Panc1 (cell line): ENCODE measurements at regions of chr10 and their contacts with region 1.

Region 1: DNA sequence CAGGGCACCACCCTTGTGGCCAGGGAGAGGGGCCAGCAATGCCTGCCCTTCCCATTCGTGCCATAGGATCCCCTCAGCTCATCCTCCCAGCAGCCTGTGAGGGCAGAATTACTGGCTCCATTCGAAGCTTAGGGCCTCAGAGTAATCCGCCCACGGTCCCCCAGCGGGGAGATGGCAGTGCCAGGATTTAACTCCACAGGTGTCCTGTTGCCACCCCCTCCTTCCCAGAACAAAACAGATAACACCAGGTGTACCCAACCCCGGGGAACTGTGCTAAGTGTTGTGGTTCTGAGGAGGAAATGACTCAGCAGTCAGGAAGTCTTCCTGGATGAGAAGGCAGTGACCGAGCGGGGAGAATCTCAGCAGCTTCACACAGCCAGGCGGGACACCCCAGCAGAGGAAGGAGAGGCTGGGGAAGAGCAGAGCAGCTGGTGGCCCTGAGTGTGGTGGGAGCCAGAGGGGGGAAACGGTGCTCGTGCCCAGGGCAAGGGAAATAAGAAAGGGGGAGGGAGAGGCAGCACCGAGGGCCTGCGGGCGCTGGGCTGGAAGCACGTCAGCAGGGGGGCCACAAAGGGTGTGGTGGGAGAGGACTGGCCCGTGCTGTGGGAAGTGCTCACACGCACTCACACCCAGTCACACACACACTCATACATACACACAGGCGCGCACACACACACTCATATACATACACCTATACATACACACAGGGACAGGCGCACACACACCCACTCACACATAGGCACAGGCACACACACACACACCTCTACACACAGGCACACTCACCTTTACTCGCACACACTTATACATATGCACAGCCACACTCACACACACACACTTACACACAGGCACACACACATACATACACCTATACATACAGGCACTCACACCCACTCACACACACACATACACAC is 59.8 kb upstream of the CHST15 start:
- DNase-seq: peak; percentile 87
- ATAC-seq: peak; percentile 88
- H3K4me3 ChIP-seq: peak overlapping the region; percentile 10 to 50; a peak in 3 of 4 replicates
- H3K27ac ChIP-seq: peak overlapping the region; percentile 78
- H3K4me1 ChIP-seq: peaks cover 54% of the 10 kb centered on the region
- H3K27me3 ChIP-seq: no peaks in the 10 kb centered on the region
- CTCF ChIP-seq: no peak

Region 2: GRCh38 chr10:124106241-124106879 is 46.8 kb before region 1 on chr10:
- CTCF ChIA-PET with region 1: no interaction called
- POLR2A ChIA-PET with region 1: no interaction called
- in situ Hi-C with region 1: no loop called
- intact Hi-C with region 1: loop called (anchors 5 kb)
- DNase-seq: no peak
- ATAC-seq: peak; percentile 59
- H3K4me3 ChIP-seq: peak overlapping the region in 1 of 2 experiments; percentile 21; a peak in 1 of 4 replicates
- H3K27ac ChIP-seq: peak overlapping the region; percentile 75
- H3K4me1 ChIP-seq: peaks cover 26% of the 10 kb centered on the region
- H3K27me3 ChIP-seq: no peaks in the 10 kb centered on the region
- CTCF ChIP-seq: no peak

Region 3: DNA sequence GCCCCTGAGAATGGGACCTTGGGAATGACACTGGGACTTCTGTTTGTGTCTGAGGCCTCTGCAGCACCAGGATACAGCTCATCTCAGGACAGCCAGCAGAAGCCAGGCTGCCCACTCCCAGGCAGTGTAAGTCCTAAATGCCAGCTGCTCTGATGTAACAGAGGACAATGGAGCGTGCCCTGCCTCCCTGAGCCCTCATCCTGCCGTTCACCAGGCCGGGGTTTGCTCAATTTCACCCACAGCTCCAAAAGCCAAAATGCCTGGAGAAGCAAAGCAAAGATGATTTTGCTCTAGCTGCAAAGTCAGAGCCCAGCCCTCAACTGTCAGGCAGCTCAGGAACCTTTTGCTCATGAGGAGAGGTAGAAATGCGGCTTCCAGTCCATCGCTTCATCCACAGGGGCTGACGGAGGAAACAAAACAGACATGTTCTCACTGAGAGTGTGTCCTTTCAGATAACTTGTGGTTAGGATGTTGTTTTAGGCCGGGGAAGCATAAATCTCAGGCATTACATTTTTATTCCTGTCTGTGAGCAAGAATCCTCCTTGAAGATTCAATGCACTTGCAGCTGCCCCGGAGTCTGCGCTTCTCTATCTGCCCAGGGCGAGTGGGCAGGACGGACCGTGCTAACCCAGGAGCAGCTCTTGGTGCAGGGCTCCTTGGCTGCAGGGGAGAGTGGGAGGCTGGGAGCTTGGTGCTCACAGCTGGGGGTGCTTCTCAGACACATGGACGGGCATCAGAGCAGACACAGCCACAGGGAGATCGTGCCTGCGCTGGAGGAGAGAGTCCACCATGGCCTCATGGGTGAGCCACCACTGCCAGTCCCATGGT is 23.4 kb after region 1 on chr10:
- CTCF ChIA-PET with region 1: no interaction called
- POLR2A ChIA-PET with region 1: no interaction called
- in situ Hi-C with region 1: no loop called
- intact Hi-C with region 1: no loop called
- DNase-seq: no peak
- ATAC-seq: peak; percentile 28; the same call in 1 of the 2 replicates
- H3K4me3 ChIP-seq: no peak overlapping the region
- H3K27ac ChIP-seq: no peak overlapping the region
- H3K4me1 ChIP-seq: no peaks in the 10 kb centered on the region
- H3K27me3 ChIP-seq: no peaks in the 10 kb centered on the region
- CTCF ChIP-seq: no peak